PC-3 (cell line): ENCODE measurements at regions of chr22 and their contacts with region 1.

Region 1: GRCh38 chr22:25048659-25049647 is 96.4 kb downstream of the KIAA1671 start:
- DNase-seq: peak; percentile 64
- ATAC-seq: peak; percentile 76
- H3K4me3 ChIP-seq: no peak overlapping the region
- H3K27ac ChIP-seq: no peak overlapping the region
- H3K4me1 ChIP-seq: peaks cover 5% of the 10 kb centered on the region
- H3K27me3 ChIP-seq: no peaks in the 10 kb centered on the region
- CTCF ChIP-seq: peak; percentile 81

Region 2: DNA sequence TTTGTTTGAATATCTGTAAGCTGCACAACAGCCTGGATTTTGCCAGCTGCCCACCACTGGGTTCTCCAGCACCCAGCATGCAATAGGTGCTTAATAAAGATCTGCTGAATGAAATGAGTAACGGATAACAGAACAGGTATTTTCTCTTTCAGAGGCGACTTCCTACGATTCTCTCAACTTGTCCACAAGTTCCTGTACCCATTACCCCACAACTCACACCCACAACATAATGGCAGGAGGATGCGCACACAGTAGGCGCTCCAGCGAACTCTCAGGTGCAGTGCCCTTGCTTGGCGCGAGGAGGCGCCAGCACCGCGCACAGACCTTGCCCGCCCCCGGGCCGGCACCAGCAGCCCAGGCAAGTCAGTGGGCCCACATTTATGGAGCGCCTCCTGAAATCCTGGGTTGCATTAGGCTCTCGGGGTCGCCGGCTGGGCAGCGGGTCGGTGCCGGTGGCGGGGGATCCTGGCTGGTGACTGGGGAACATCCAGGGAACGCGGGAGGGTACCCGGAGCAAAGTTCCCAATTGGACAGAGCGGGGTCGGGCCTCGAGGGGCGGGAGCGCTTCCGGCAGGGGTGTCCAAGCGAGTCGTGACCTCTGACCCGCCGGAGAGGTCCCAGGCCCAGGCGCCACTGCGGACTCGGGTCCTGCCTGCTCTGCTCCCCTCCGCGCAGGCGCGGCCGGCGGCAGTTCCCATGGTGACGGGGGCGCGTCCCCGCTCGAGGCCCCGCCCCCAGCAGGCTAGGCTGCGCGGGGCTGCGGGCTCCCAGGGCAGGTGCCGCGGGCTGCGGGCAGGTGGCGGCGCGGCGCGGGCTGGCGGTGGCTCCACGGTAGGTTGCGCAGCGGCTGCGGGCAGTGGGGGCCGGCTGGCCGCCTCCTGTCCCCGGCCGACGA is 96.8 kb before region 1 on chr22 and contains the start of gene KIAA1671:
- CTCF ChIA-PET with region 1: no interaction called
- POLR2A ChIA-PET with region 1: no interaction called
- intact Hi-C with region 1: loop called (anchors 1 kb)
- DNase-seq: peak; percentile 85
- ATAC-seq: peak; percentile 86
- H3K4me3 ChIP-seq: peak within 1 kb of the TSS; percentile 98
- H3K27ac ChIP-seq: peak within 1 kb of the TSS; percentile 88
- H3K4me1 ChIP-seq: peaks cover 13% of the 10 kb centered on the region
- H3K27me3 ChIP-seq: no peaks in the 10 kb centered on the region
- CTCF ChIP-seq: peak; percentile 91
- total RNA-seq, gene KIAA1671: 18.6 and 22.1 TPM in 2 replicates

Region 3: DNA sequence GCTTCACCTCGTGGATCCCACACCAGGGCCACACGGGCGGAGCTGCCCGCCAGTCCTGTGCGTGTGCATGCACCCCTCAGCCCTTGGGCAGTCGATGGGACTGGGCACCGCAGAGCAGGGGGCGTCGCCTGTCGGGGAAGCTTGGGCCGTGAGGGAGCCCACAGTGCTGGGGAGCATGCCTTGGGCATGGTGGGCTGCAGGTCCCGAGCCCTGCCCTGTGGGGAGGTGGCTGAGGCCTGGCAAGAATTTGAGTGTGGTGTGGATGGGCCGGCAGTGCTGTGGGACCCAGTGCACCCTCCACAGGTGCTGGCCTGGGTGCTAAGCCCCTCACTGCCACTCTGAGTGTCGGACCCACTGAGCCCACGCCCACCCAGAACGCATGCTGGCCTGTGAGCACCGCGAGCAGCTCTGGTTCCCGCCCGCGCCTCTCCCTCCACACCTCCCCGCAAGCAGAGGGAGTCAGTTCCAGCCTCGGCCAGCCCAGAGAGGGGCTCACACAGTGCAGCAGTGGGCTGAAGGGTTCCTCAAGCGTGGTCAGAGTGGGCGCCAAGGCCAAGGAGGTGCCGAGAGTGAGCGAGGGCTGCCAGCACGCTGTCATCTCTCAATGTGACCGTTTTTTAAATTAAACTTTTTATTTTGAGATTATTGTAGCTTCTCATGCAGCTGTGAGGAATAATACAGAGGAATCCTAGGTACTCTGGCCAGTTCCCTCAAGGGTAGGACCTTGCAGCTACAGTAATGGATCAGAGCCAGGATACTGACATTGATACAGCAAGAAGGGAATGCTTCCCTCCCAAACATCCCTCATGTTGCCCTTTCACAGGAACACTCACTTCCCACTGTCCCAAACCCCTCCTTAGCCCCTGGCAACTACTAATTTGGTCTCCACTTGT is 298.2 kb after region 1 on chr22:
- CTCF ChIA-PET with region 1: no interaction called
- POLR2A ChIA-PET with region 1: no interaction called
- intact Hi-C with region 1: no loop called
- DNase-seq: no peak
- ATAC-seq: no peak
- H3K4me3 ChIP-seq: no peak overlapping the region
- H3K27ac ChIP-seq: no peak overlapping the region
- H3K4me1 ChIP-seq: no peaks in the 10 kb centered on the region
- H3K27me3 ChIP-seq: no peaks in the 10 kb centered on the region
- CTCF ChIP-seq: no peak

Region 4: DNA sequence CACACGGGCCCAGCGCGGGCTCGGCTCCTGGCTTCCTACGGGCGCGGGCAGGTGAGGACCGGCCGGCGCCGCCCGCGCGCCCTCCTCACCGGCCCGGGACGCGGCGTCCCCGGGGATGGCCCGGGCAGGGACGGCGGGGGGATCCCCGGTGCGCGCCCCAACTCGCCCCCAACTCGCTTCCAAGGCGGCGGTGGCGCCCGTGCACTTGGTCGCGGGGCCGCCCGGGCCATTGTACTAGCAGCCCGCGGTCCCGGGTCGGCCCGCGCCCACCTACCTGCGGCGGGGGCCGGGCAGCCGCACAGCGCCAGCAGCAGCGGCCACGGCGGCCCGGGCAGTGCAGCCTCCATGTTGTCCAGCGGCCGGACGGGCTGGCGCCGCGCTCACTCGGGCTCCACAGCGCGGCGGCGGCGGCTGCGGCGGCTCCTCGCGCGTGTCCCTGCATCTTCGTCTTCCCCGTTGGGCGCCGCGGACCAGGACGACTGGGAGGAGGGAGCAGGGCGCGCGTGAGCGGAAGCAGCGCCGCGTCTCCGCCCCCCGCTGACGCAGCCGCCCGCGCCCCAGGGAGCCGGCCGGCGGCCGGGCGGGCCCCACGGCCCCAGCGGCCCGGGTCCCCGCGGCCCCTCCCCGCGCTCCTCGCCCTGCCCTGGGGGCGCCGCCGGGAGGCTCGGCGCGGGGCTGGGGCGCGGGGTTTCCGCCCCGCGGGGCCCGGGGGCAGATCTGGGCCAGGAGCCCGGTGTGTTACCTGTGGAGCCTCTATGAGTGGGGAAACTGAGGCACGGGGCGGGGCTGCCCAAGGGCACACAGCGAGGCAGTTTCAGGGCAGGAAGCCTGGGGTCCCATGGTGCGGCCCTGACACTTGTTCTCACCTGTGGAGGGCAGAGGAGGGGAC is 356.2 kb after region 1 on chr22:
- CTCF ChIA-PET with region 1: no interaction called
- POLR2A ChIA-PET with region 1: interaction called, 20 read pairs
- intact Hi-C with region 1: no loop called
- DNase-seq: peak; percentile 60
- ATAC-seq: peak; percentile 25
- H3K4me3 ChIP-seq: peak overlapping the region; percentile 80
- H3K27ac ChIP-seq: peak overlapping the region; percentile 68; the same call in 1 of the 2 replicates
- H3K4me1 ChIP-seq: peaks cover 25% of the 10 kb centered on the region
- H3K27me3 ChIP-seq: no peaks in the 10 kb centered on the region
- CTCF ChIP-seq: no peak